ENCODE measurements at regions of chr2 and their contacts with region 1.

Region 1: GRCh38 chr2:222969491-222969890 is 82.5 kb upstream of the KCNE4 start:
- DNase-seq: no peak
- H3K4me3 ChIP-seq: no peak overlapping the region
- H3K27ac ChIP-seq: no peak overlapping the region
- H3K4me1 ChIP-seq: no peaks in the 10 kb centered on the region
- H3K27me3 ChIP-seq: peaks cover 0 to 10% of the 10 kb centered on the region in 2 experiments
- CTCF ChIP-seq: no peak
- POLR2A ChIP-seq: no peak

Region 2: GRCh38 chr2:222982010-222982908 is 12.8 kb after region 1 on chr2:
- CTCF ChIA-PET with region 1: interaction called, 22 read pairs
- POLR2A ChIA-PET with region 1: no interaction called
- dilution Hi-C with region 1: no loop called
- intact Hi-C with region 1: no loop called
- DNase-seq: peak; percentile 54
- H3K4me3 ChIP-seq: no peak overlapping the region
- H3K27ac ChIP-seq: no peak overlapping the region
- H3K4me1 ChIP-seq: no peaks in the 10 kb centered on the region
- H3K27me3 ChIP-seq: no peaks in the 10 kb centered on the region
- CTCF ChIP-seq: peak in 1 of 2 donors; percentile 50
- POLR2A ChIP-seq: no peak

Region 3: GRCh38 chr2:223123855-223124610 is 154.5 kb after region 1 on chr2:
- CTCF ChIA-PET with region 1: no interaction called
- POLR2A ChIA-PET with region 1: no interaction called
- dilution Hi-C with region 1: no loop called
- intact Hi-C with region 1: no loop called
- DNase-seq: no peak
- H3K4me3 ChIP-seq: no peak overlapping the region
- H3K27ac ChIP-seq: no peak overlapping the region
- H3K4me1 ChIP-seq: peaks cover 24% of the 10 kb centered on the region
- H3K27me3 ChIP-seq: no peaks in the 10 kb centered on the region
- CTCF ChIP-seq: no peak
- POLR2A ChIP-seq: no peak

Region 4: DNA sequence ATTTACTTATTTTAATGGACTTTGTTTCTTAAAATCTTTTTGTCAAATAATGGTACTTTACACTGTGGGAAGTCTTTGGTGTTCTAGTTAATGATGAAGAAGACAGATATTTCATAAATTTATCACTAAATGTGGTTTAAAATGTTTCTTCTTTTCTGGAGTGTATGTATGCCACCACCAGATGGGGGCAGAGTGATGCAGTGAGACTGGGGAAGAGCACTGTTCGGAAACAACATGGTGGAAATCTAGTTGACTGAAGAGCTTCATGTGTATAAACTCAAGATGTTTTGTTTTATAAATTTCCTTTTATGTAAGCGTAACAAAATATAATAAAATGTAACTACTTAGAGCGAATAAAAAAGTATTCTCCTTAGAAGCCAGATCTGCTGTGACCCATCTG is 277.6 kb after region 1 on chr2:
- CTCF ChIA-PET with region 1: interaction called, 16 read pairs
- POLR2A ChIA-PET with region 1: no interaction called
- dilution Hi-C with region 1: no loop called
- intact Hi-C with region 1: no loop called
- DNase-seq: peak; percentile 40
- H3K4me3 ChIP-seq: no peak overlapping the region
- H3K27ac ChIP-seq: no peak overlapping the region
- H3K4me1 ChIP-seq: no peaks in the 10 kb centered on the region
- H3K27me3 ChIP-seq: no peaks in the 10 kb centered on the region
- CTCF ChIP-seq: peak; percentile 16 to 33
- POLR2A ChIP-seq: no peak

Region 5: GRCh38 chr2:223383315-223383714 is 413.8 kb after region 1 on chr2:
- CTCF ChIA-PET with region 1: interaction called, 5 read pairs
- POLR2A ChIA-PET with region 1: no interaction called
- dilution Hi-C with region 1: no loop called
- intact Hi-C with region 1: loop called (anchors 1 kb)
- DNase-seq: no peak
- H3K4me3 ChIP-seq: no peak overlapping the region
- H3K27ac ChIP-seq: no peak overlapping the region
- H3K4me1 ChIP-seq: no peaks in the 10 kb centered on the region
- H3K27me3 ChIP-seq: peaks cover 0 to 3% of the 10 kb centered on the region in 2 experiments
- CTCF ChIP-seq: no peak
- POLR2A ChIP-seq: no peak

Region 6: DNA sequence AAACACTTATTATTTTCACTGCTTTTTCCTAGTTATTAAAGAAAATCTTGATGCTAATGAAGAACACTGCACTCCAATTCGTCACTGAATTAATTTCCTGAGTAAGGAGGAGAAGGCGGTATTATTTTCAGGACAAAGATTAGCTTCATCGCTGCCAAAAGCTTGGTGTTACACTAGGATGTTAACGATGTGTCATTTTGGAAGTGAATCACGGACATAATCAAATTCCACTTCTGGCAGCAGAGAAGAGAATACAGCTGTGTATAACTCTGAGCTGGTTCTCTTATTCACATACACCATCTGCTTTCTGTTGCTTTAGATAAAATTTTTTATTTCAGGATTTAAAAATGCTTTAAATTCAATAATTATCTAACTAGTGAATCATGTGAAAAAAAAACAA is 558.5 kb after region 1 on chr2:
- CTCF ChIA-PET with region 1: no interaction called
- POLR2A ChIA-PET with region 1: no interaction called
- dilution Hi-C with region 1: no loop called
- intact Hi-C with region 1: no loop called
- DNase-seq: no peak
- H3K4me3 ChIP-seq: no peak overlapping the region
- H3K27ac ChIP-seq: no peak overlapping the region
- H3K4me1 ChIP-seq: no peaks in the 10 kb centered on the region
- H3K27me3 ChIP-seq: no peaks in the 10 kb centered on the region
- CTCF ChIP-seq: no peak
- POLR2A ChIP-seq: no peak

Region 7: GRCh38 chr2:223601932-223602666 is 632.6 kb after region 1 on chr2 and contains the start of gene SCG2:
- CTCF ChIA-PET with region 1: interaction called, 12 read pairs
- POLR2A ChIA-PET with region 1: interaction called, 7 read pairs
- dilution Hi-C with region 1: no loop called
- intact Hi-C with region 1: loop called (anchors 1 kb)
- DNase-seq: peak; percentile 76
- H3K4me3 ChIP-seq: no peak within 1 kb of the TSS
- H3K27ac ChIP-seq: no peak within 1 kb of the TSS
- H3K4me1 ChIP-seq: no peaks in the 10 kb centered on the region
- H3K27me3 ChIP-seq: peaks cover 10 to 13% of the 10 kb centered on the region in 2 experiments
- CTCF ChIP-seq: no peak
- POLR2A ChIP-seq: no peak
- total RNA-seq, gene SCG2: not detected in 2 replicates

Region 8: DNA sequence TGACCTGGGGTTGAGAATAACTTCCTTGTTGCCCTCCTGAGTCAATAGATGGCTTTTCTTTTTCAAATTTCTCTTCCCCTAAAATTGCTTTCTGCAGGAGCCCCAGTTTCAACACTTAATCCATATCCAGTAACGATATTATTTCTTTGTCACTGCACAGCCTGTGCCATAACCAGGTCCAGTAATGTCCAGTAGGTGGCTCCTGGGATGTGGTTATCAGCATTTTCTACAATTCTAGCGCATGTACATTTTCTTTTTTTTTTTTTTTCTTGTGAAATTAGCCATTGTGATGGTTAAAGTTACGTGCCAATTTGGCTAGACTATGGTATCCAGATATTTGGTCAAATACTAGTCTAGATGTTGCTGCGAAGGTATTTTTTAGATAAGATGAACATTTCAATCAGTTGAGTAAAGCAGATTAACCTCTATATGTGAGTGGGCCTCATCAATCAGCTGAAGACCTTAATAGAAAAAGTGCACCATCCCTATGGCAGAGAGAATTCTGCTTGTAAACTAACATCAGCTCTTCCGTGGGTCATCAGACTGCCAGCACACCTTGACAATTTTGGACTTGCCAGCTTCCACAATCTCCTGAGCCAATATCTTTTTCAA is 705.6 kb after region 1 on chr2:
- CTCF ChIA-PET with region 1: interaction called, 8 read pairs
- POLR2A ChIA-PET with region 1: no interaction called
- dilution Hi-C with region 1: no loop called
- intact Hi-C with region 1: loop called (anchors 5 kb)
- DNase-seq: peak; percentile 69
- H3K4me3 ChIP-seq: no peak overlapping the region
- H3K27ac ChIP-seq: no peak overlapping the region
- H3K4me1 ChIP-seq: no peaks in the 10 kb centered on the region
- H3K27me3 ChIP-seq: no peaks in the 10 kb centered on the region
- CTCF ChIP-seq: peak; percentile 60 to 69
- POLR2A ChIP-seq: no peak